ENCODE measurements at regions of chr7 and their contacts with region 1.

Region 1: GRCh38 chr7:36021367-36021766 is 131.7 kb upstream of the EEPD1 start:
- DNase-seq: peak; percentile 23
- H3K4me3 ChIP-seq: no peak overlapping the region
- H3K27ac ChIP-seq: no peak overlapping the region
- H3K4me1 ChIP-seq: no peaks in the 10 kb centered on the region
- H3K27me3 ChIP-seq: peaks cover 9 to 24% of the 10 kb centered on the region in 2 experiments
- CTCF ChIP-seq: peak; percentile 46 to 53
- POLR2A ChIP-seq: no peak

Region 2: GRCh38 chr7:36010656-36011587 is 10.4 kb before region 1 on chr7:
- CTCF ChIA-PET with region 1: interaction called, 13 read pairs
- POLR2A ChIA-PET with region 1: no interaction called
- dilution Hi-C with region 1: no loop called
- intact Hi-C with region 1: no loop called
- DNase-seq: no peak
- H3K4me3 ChIP-seq: no peak overlapping the region
- H3K27ac ChIP-seq: no peak overlapping the region
- H3K4me1 ChIP-seq: no peaks in the 10 kb centered on the region
- H3K27me3 ChIP-seq: no peaks in the 10 kb centered on the region
- CTCF ChIP-seq: no peak
- POLR2A ChIP-seq: no peak

Measured in endothelial cell of umbilical vein (primary cell).